OCI-LY7 (cell line): ENCODE measurements at regions of chr6 and their contacts with region 1.

Region 1: DNA sequence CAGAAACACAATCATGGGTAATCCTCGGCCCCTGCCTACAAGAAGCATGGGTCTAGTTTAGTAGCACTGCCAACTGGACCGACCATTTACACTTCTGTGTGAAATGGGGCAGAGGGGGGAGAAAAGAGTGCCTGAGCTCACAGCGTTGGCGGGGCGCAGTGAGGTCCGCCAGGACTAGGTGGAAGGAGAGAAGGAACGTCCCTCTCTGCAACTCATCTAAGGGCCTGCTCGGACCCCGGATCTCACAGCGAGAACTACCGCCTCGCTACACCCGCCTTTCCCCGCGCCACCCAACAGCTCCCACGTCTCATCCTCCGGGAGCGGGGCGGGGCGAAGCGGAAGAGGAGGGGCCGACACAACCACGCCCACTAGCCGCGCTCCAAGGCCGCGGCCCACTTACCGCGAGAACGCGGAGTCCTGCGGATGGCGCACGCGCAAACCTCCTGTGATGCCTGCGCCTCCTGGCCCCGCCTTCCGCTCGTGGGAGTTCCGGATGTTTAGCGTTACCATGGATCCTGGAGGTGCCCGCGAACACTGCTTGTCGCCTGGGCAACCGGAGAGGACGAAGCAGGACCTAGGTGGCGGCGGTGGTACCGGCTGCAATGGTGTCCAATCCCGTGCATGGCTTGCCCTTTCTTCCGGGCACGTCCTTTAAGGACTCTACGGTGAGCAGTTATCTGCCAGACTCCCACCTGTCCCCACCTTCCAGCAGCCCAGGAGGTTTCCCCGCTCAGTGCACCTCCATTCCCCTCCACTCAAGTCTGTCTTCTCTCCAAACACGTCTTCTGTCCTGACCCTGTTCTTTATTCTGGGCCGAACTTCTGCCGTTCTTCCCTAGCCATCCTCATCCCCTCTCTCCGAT is at the start of gene EFHC1:
- DNase-seq: peak; percentile 99
- H3K4me3 ChIP-seq: peak within 1 kb of the TSS; percentile 75
- H3K27ac ChIP-seq: peak within 1 kb of the TSS; percentile 60
- H3K4me1 ChIP-seq: peaks cover 56% of the 10 kb centered on the region
- CTCF ChIP-seq: no peak
- total RNA-seq, gene EFHC1: 20.7 and 24.8 TPM in 2 replicates

Region 2: DNA sequence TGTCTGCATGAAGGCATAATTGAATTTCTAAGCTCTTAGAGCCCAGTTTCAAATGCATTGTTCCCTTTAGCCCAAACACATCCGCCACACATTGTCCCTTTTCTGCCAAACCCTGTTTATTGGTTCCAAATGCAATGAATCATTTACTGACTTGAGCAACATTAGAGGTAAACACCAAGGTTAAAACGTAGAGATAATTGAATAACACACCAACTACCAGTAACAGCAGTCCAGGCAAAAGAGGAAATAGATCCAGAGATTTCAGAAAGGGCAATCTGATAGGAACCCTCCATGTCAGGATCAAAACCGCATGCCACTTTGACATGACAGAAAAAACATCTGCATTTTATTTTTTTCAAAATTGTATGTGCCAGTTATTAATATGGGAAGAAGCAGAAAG is 447.4 kb before region 1 on chr6:
- CTCF ChIA-PET with region 1: no interaction called
- POLR2A ChIA-PET with region 1: no interaction called
- intact Hi-C with region 1: no loop called
- DNase-seq: no peak
- H3K4me3 ChIP-seq: no peak overlapping the region
- H3K27ac ChIP-seq: no peak overlapping the region
- H3K4me1 ChIP-seq: no peaks in the 10 kb centered on the region
- CTCF ChIP-seq: no peak

Region 3: DNA sequence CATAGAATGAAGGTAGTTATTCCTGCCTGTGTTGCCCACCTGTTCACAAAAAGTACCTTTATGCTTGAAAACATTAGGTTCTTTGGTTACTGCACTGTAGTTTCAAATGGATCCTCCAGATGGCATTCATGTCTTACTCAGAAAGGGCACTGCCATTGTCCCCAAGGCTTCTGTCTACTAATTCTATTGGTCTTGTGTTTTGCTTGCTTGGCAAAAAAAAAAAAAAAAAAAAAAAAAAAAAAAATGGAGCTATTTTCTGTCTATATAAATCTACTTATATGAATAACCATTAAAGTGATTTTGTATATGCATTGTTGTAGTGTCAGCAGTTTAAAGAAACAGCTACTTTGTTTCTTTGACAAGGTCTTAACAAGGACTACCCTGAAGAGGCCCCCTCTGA is 12.6 kb before region 1 on chr6:
- CTCF ChIA-PET with region 1: no interaction called
- POLR2A ChIA-PET with region 1: interaction called, 10 read pairs
- intact Hi-C with region 1: no loop called
- DNase-seq: peak; percentile 80
- H3K4me3 ChIP-seq: no peak overlapping the region
- H3K27ac ChIP-seq: no peak overlapping the region
- H3K4me1 ChIP-seq: no peaks in the 10 kb centered on the region
- CTCF ChIP-seq: peak; percentile 92

Region 4: GRCh38 chr6:52503848-52504781 is 84.1 kb after region 1 on chr6:
- CTCF ChIA-PET with region 1: interaction called, 9 read pairs
- POLR2A ChIA-PET with region 1: interaction called, 129 read pairs
- intact Hi-C with region 1: loop called (anchors 1 kb)
- DNase-seq: no peak
- H3K4me3 ChIP-seq: no peak overlapping the region
- H3K27ac ChIP-seq: no peak overlapping the region
- H3K4me1 ChIP-seq: peaks cover 34% of the 10 kb centered on the region
- CTCF ChIP-seq: no peak

Region 5: DNA sequence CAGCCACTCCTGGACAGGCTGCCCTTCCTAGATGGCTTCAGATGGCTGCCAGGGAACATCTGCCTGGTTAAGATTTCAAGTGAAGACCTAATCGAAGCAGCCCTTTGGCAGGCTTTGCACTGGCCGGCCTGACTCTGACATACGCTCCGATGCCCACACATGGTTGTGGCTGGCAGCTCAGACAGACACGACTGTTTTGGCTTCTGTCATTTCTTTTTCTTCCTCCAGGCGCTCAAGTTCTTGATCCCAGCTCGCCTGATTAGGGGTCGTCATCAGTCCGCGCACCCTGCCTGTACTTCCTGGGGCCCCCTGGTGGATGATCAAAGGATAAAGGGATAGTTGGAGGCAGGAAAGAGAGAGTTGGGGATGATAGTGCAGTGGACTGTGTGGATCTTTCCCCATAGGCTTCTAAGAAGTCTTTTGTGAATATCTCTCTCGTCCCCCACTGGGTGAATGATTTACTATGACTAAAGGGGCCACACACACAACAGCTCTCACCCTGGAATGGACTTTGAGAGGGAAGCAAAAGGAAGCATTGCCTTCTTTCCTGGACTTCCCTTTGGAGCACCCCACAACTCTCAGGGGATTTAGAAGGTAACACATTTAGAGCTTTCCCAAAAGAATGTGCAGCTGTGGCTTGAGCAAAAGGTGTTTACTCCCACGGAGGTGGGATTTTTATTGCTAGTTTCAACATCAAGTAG is 178.2 kb after region 1 on chr6:
- CTCF ChIA-PET with region 1: interaction called, 4 read pairs
- POLR2A ChIA-PET with region 1: interaction called, 50 read pairs
- intact Hi-C with region 1: loop called (anchors 1 kb)
- DNase-seq: peak; percentile 84
- H3K4me3 ChIP-seq: peak overlapping the region; percentile 19
- H3K27ac ChIP-seq: peak overlapping the region; percentile 89
- H3K4me1 ChIP-seq: peaks cover 67% of the 10 kb centered on the region
- CTCF ChIP-seq: peak; percentile 86

Region 6: DNA sequence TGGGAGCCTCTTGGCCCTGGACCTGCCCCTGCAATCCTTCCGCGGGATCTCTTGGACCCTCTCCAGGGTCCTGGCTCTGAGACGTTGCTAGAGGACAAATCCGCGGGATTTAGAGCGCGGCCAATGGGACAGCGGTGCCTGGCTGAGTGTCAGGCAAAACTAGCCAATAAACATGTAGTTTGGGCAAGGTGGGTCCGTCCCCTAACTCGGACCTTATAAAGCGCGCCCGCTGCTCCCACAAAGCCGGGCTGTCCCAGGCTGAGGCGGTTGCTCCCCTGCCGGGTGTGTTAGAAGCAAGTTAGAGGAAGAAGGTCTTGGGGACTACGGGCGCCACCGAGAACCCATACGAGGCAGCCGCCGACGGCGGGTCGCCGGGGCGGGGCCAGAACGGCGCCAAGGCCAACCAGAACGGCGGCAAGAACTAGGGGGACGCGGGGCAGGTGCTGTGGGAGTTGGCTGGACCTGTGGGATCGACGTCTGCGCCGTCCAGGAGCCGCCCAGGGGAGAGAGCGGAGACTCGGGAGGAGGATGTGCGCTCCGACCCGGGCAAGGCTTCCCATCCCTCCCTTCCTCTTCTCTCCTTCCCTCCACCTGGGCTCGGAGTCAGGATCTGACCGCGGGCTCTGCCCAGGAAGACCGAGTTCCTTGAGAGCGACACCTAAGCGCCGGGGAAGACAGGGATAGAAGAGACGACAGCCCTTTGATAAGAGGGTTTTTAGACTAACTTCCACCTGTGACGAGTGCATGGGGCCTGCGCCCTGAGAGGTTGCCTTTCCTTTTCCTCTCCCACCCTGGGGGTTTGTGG is 244.3 kb after region 1 on chr6:
- CTCF ChIA-PET with region 1: interaction called, 13 read pairs
- POLR2A ChIA-PET with region 1: interaction called, 20 read pairs
- intact Hi-C with region 1: loop called (anchors 1 kb)
- DNase-seq: peak; percentile 97
- H3K4me3 ChIP-seq: peak overlapping the region; percentile 81
- H3K27ac ChIP-seq: peak overlapping the region; percentile 53
- H3K4me1 ChIP-seq: peaks cover 58% of the 10 kb centered on the region
- CTCF ChIP-seq: no peak